ENCODE measurements at regions of chr5 and their contacts with region 1.

Region 1: GRCh38 chr5:71601222-71602041 is 14.3 kb downstream of the MCCC2 start:
- DNase-seq: peak; percentile 86
- H3K4me3 ChIP-seq: no peak overlapping the region
- H3K27ac ChIP-seq: no peak overlapping the region
- H3K4me1 ChIP-seq: no peaks in the 10 kb centered on the region
- H3K27me3 ChIP-seq: no peaks in the 10 kb centered on the region
- CTCF ChIP-seq: peak; percentile 81

Region 2: GRCh38 chr5:71615809-71616208 is 14.4 kb after region 1 on chr5:
- CTCF ChIA-PET with region 1: no interaction called
- POLR2A ChIA-PET with region 1: no interaction called
- intact Hi-C with region 1: loop called (anchors 2 kb)
- DNase-seq: no peak
- H3K4me3 ChIP-seq: no peak overlapping the region
- H3K27ac ChIP-seq: no peak overlapping the region
- H3K4me1 ChIP-seq: no peaks in the 10 kb centered on the region
- H3K27me3 ChIP-seq: no peaks in the 10 kb centered on the region
- CTCF ChIP-seq: no peak

Region 3: DNA sequence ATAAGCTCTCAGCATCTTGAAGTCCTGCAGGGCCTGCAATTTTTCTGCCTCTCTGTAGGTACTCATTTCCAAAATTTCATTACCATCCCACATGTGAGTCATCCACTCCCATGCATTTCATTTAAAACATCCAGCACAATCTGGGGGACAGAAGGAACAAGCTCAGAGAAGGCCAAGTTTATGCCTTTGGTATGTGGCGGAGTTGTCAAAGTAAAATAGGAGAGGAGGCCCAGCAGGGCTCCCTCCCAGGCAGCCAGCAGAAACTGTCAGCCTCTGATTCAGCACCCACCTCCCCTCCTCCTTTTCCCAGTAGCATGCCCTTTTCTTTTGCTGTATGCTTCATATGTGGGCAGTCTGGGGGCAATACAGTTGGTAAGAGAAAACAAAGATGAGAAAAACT is 1032.2 kb after region 1 on chr5:
- CTCF ChIA-PET with region 1: no interaction called
- POLR2A ChIA-PET with region 1: no interaction called
- intact Hi-C with region 1: no loop called
- DNase-seq: peak; percentile 18
- H3K4me3 ChIP-seq: no peak overlapping the region
- H3K27ac ChIP-seq: no peak overlapping the region
- H3K4me1 ChIP-seq: no peaks in the 10 kb centered on the region
- H3K27me3 ChIP-seq: no peaks in the 10 kb centered on the region
- CTCF ChIP-seq: no peak

Measured in A673 (cell line).